Activated naive CD4-positive, alpha-beta T cell treated with anti-CD3 and anti-CD28 coated beads for 36 hours (primary cell): ENCODE measurements at regions of chr2 and their contacts with region 1.

Region 1: DNA sequence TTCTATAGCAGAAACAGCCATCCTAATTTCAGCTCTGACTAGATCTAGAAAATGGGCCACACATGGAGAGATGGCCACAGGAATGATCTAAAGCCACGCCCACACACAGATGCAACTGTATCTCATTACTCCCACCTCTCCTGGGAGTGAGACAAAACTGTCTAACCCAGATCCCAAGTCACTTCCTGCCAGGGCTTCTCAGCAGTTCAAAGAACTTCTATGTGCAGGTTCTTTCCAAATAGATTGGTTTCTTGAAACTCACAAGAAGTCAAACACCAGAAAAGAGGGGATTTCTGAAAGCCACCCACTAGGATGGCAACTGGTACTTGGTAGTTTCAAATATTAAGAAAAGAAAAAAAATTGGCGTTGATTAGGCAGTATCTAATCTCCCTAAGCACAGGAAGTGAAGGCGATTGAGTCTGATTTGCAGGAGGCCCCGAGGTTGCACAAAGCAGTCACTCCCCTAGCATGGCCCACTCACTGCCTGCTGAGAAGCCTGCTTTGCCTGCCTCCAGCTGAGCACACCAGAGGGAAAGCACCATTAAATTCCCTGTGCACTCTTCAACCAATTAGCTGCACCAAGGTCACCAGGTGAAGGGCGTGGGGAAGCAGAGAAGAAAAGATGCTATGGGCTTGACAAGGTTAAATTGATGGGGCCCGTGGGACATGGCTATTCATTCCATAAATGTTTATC is 51.1 kb downstream of the PAPOLG start:
- DNase-seq: peak; percentile 85
- H3K4me3 Mint-ChIP-seq: peak overlapping the region; percentile 28
- H3K27ac Mint-ChIP-seq: peak overlapping the region; percentile 90
- H3K4me1 Mint-ChIP-seq: peaks cover 48% of the 10 kb centered on the region
- H3K27me3 Mint-ChIP-seq: no peaks in the 10 kb centered on the region

Region 2: DNA sequence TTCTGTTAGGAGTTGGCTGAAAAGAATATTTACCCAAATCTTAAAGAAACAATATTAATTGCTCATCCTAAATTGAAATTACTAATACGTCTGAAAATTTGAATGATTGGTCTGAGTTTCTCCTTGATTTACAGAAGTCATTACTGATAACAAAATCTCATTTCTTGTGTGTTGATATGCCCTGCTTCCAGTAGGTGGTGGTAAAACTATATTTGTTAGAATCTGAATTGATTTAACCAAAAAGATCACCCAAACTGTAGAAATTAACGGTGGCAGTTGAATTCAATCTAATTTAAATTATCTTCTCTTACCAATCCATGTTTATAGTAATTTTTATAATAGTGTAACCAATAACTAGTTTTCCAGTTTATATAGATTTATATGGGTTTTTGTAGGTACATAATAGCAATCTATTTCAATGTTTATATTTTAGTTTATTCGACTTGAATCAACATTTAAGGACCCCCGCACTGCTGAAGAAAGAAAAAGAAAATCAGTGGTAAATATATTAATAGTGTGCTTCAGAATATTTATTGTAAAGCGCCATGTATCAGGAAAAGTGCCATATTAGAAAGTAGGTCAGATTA is 12.8 kb before region 1 on chr2:
- CTCF ChIA-PET with region 1: interaction called, 4 read pairs
- intact Hi-C with region 1: loop called (anchors 1 kb)
- DNase-seq: no peak
- H3K4me3 Mint-ChIP-seq: no peak overlapping the region
- H3K27ac Mint-ChIP-seq: no peak overlapping the region
- H3K4me1 Mint-ChIP-seq: peaks cover 20% of the 10 kb centered on the region
- H3K27me3 Mint-ChIP-seq: no peaks in the 10 kb centered on the region

Region 3: DNA sequence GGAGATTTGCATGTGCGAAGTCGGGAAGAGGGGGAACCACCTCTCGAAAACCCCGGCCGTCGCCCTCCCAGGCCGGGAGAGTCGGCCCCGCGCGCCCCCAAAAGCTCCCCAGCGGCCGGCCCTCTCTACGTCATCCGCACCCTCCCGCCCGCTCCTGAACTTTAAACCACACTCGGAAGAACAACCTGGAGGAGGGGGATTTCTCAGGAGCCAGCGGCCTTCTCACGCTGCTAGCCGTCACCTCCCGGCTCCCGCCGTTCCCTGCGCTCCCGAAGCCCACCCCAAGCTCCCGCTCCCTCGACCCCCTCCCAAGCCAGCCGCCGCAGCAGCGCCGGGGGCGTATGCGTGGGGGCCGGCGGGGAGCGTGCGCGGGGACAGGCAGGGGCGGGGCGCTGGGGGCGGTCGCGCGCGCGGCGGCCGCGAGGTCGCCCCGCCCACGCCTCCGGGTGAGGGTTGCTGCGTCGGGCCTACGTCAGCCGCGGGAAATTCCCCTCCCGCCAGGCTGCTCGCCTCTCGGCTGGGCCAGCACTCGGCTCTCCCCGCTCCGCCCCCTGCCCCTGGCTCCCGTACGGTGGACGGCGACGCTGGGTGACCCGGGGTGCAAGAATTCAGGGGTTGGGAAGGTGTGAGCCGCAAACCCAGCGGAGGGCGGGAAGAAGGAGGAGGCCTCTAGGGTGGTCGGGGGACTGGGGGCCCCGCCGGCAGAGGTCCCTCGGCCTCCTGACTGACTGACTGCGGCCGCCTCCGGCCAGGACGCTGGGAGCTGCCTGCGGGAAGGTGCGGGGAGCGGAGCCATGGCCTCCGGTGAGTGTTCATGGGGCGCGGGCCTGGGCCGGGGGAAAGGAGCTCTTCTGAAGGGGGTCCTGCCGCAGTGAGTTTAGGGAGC is 74.2 kb after region 1 on chr2 and contains the start of gene REL:
- CTCF ChIA-PET with region 1: interaction called, 8 read pairs
- intact Hi-C with region 1: loop called (anchors 1 kb)
- DNase-seq: peak; percentile 94
- H3K4me3 Mint-ChIP-seq: peak within 1 kb of the TSS; percentile 100
- H3K27ac Mint-ChIP-seq: peak within 1 kb of the TSS; percentile 98
- H3K4me1 Mint-ChIP-seq: peaks cover 21% of the 10 kb centered on the region
- H3K27me3 Mint-ChIP-seq: no peaks in the 10 kb centered on the region
- total RNA-seq, gene REL: 40.3 to 40.5 TPM

Region 4: GRCh38 chr2:60976875-60977561 is 169.9 kb after region 1 on chr2:
- CTCF ChIA-PET with region 1: no interaction called
- intact Hi-C with region 1: loop called (anchors 1 kb)
- DNase-seq: peak; percentile 48
- H3K4me3 Mint-ChIP-seq: no peak overlapping the region
- H3K27ac Mint-ChIP-seq: peak overlapping the region; percentile 69
- H3K4me1 Mint-ChIP-seq: peaks cover 53% of the 10 kb centered on the region
- H3K27me3 Mint-ChIP-seq: no peaks in the 10 kb centered on the region

Region 5: GRCh38 chr2:61016808-61017555 is 209.8 kb after region 1 on chr2:
- CTCF ChIA-PET with region 1: no interaction called
- intact Hi-C with region 1: loop called (anchors 1 kb)
- DNase-seq: peak; percentile 82
- H3K4me3 Mint-ChIP-seq: peak overlapping the region; percentile 98
- H3K27ac Mint-ChIP-seq: peak overlapping the region; percentile 95
- H3K4me1 Mint-ChIP-seq: peaks cover 43% of the 10 kb centered on the region
- H3K27me3 Mint-ChIP-seq: no peaks in the 10 kb centered on the region

Region 6: DNA sequence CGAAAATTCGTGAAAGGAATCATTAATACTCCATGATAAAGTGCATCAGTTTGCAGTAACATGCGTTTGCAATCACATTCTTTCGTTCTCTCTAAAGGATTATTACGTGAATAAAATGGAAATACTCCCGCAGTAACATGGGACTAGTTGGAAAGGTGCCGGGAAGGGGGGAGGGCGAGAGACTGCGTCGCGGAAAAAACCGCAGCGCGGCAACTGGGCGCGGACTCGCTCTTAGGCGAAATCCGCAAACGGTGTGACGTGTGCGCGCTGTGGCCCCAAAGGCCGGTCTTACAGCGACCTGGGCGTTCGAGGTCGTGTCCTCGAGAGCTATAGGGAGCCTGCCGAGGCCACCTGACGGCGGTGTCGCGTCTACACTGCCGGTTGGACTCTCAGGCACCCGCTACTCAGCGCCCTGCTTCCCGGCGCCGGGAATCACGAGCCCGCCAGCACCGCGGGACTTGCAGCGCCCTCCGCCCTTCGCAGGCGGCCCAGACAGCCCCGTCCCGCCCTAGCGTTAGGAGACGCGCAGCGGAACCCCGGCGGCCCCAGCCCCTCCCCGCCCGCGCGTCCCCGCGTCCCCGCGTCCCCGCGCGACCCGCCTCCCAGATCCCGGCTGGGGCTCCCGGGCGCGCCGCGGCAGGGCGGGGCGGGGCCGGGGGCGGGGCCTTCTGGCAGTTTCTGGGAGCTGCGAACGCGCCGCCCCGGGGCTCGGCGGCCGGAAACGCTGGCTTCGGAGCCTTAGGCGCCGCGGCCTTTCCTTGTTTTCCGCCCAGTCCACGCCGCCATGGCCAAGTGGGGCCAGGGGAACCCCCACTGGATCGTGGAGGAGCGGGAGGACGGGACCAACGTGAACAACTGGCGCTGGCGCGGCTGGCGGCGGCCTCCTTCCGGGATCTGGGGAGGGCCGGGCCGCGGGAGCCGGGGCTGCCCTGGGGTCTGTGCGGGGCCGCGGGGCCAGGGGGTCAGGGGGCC is 369.9 kb after region 1 on chr2:
- CTCF ChIA-PET with region 1: no interaction called
- intact Hi-C with region 1: loop called (anchors 2 kb)
- DNase-seq: peak; percentile 94
- H3K4me3 Mint-ChIP-seq: peak overlapping the region; percentile 78
- H3K27ac Mint-ChIP-seq: peak overlapping the region; percentile 79
- H3K4me1 Mint-ChIP-seq: peaks cover 48% of the 10 kb centered on the region
- H3K27me3 Mint-ChIP-seq: no peaks in the 10 kb centered on the region